ENCODE measurements at regions of chr16 and their contacts with region 1.

Region 1: DNA sequence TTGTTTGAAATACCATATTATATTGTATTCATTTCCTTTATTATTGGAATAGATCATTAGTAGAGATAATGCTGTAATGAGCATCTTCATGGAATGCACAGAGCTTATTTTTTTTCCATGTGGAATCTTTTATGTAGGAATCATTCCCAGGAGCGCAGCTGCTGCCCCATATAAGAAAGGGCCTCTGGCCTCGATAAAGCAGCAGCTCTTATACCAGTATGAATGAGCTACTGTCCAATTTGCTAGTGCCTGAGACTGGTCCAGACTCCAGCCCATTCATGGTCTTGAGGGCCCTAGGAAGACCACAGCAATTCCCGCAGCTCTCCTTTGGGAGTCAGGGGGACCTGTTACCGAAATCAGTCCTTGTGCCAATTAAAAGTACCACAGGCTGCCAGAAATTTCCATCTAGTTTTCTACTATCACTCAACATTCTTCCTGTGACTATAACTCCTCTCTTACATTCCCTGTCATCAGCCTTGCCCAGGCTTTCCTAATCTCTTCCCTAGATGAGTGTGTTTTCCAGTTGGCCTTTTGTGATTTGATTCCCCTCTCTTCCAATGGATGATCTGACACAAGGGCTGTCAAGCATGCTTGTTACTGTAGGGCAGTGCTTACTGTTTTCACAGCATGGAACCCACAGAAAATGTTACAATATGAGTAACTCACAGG is 1.9 kb downstream of the ZNF843 start:
- DNase-seq: no peak
- H3K4me3 ChIP-seq: no peak overlapping the region
- H3K27ac ChIP-seq: no peak overlapping the region
- H3K4me1 ChIP-seq: no peaks in the 10 kb centered on the region
- H3K27me3 ChIP-seq: no peaks in the 10 kb centered on the region
- CTCF ChIP-seq: no peak

Region 2: DNA sequence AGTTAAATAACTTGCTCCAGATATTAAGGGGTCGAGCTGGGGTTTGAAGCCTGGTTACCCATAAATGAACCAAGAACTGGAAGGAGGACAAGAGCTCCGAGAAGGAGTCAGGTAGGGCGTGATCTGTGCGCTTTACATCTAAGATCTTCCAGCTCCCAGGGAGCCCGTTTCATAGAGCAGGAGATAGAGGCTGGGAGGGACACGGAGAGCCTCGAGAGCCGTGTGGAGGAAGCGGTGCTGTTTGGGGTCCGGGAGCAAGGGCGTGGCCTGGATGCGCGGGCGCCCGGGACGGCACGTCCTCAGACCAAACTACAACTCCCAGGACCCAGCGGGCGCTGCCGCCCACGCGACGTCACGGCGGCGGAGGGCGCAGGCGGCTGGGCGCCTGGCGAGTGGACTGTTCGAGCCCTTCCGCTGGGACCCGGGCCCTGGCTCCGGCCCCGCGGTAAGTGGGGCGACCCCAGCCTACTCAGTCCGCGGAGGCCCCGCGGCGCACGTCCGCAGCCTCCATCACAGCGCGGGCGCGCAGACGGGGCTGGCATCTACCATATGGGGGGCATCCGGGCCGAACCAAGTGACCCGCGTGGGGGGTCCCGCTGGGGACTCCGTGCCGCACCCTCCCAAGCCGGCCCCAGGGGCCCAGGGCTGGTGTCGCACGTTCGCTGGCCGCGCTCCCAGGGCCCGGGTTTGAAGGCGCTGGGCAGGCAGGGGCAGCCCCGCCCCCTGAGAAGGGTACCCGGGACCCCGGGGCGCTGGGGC is 332.4 kb before region 1 on chr16 and contains the start of gene BCKDK:
- intact Hi-C with region 1: no loop called
- DNase-seq: peak in 1 of 2 donors; percentile 85
- H3K4me3 ChIP-seq: peak within 1 kb of the TSS; percentile 90 to 99
- H3K27ac ChIP-seq: peak within 1 kb of the TSS; percentile 92 to 97
- H3K4me1 ChIP-seq: peaks cover 9 to 17% of the 10 kb centered on the region in 2 donors
- H3K27me3 ChIP-seq: no peaks in the 10 kb centered on the region
- CTCF ChIP-seq: no peak
- total RNA-seq, gene BCKDK: 85.8 TPM

Region 3: GRCh38 chr16:31414706-31415105 is 25.9 kb before region 1 on chr16:
- intact Hi-C with region 1: no loop called
- DNase-seq: no peak
- H3K4me3 ChIP-seq: no peak overlapping the region
- H3K27ac ChIP-seq: no peak overlapping the region
- H3K4me1 ChIP-seq: no peaks in the 10 kb centered on the region
- H3K27me3 ChIP-seq: no peaks in the 10 kb centered on the region
- CTCF ChIP-seq: no peak

Region 4: DNA sequence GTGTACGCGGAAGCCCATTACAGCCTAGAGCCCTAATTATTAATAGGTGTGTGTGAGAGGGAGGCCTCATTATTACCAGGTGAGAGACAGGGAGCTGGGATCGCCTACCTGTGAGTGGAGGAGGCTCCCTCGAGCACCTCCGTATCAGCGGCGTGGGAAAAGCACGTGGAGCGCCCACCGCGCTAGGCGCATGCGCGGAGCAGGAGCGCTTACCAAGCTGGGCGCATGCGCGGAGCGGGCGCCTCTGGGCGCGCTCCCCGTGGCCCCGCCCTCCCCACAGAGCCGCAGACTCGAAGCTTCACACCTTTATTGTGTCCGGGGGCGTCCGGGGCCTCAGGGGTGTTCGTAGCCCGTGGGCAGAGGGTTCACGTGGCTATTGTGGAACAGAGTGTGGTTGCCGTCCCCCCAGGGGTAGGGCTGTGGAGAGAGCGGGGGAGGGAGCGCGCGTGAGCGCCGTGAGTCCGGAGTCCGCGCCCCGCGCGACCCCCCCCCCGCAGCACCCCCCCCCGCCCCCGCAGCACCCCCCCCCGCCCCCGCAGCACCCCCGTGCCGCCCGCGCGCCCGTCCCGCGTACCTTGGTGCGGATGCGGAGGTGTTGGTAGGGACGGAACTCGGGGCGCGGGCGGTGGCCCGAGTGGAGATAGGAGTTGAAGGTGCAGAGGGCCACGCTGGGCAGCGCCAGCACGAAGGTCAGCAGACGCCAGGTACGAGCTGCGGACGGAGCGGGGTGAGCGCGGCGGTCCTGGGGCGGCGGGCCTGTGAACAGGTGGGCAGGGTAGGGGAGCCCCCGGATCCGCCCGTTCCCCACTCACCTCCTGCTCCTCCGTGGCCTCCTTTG is 13.0 kb before region 1 on chr16:
- intact Hi-C with region 1: loop called (anchors 1 kb)
- DNase-seq: peak in 1 of 2 donors; percentile 71
- H3K4me3 ChIP-seq: peak overlapping the region; percentile 39 to 66
- H3K27ac ChIP-seq: no peak overlapping the region
- H3K4me1 ChIP-seq: peaks cover 0 to 4% of the 10 kb centered on the region in 2 donors
- H3K27me3 ChIP-seq: no peaks in the 10 kb centered on the region
- CTCF ChIP-seq: no peak

Measured in ascending aorta (tissue), 2 donors.